Activated CD4-positive, alpha-beta memory T cell treated with anti-CD3 and anti-CD28 coated beads for 36 hours (primary cell): ENCODE measurements at regions of chr13 and their contacts with region 1.

Region 1: DNA sequence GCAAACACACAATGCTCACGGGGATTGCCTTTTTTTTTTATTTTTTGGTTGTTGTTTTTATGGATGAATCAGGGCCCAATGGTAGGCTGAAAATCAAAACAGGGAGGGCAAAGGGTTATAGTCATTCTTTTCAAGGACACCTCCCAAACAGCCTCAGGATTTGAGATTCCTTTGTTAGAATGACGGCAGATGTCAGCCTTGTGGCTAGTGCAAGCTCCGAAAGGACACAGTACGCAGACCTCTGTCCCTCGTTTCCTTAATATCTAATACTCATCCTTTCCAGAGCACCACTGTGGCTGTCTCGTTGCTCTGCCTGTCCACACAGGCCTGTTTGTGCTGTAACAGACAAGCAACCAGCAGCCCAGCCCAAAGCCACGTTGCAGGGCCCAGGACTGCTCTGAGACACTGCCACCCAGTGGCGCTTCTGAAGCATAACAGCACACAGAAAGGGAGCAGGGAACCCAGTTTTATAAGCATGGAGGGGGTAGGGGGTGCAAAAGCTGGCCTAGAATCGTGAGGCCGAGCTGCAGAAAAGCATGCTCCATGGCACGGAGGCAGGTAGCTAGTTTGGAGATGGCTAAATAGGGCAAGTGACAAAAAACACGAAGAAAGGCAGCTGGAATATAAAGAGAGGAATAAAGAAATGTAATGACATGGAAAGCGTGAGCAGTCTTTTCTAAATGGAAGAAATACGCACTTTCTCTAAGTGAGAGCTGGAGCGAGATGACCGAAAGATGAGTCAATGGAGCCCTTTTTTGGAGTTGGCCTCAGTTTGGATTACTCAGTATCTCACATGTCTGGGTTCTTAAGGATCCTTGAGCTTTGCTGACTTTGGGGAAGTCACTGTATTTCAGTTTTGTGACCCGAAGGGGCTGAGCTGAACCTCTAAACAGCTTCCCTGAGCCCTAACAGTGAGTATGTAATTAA is 40.7 kb upstream of the MEDAG start:
- DNase-seq: peak; percentile 70
- H3K4me3 Mint-ChIP-seq: no peak overlapping the region
- H3K27ac Mint-ChIP-seq: no peak overlapping the region
- H3K4me1 Mint-ChIP-seq: peaks cover 7% of the 10 kb centered on the region
- H3K27me3 Mint-ChIP-seq: peaks cover 9% of the 10 kb centered on the region

Region 2: DNA sequence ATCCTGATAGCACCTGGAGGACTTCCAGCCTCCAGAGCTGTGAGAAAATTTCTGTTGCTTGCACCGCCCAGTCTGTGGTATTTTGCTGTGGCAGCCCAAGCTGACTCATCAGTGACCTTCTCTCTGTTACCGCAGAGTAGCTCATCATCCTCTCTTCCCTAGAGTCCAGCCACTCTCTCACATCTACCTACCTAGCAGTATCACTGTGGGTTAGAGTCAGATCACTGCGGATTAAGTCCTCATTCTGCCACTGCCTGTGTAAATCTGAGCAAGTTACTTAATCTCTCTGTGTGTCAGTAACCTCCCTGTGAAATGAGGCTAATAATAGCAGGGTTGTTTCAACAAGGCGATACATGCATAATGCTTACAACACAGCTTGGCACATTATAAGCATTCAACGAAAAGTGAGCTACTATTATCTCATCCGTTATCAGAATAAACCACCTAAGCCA is 288.0 kb before region 1 on chr13:
- CTCF ChIA-PET with region 1: no interaction called
- POLR2A ChIA-PET with region 1: no interaction called
- intact Hi-C with region 1: loop called (anchors 5 kb)
- DNase-seq: peak; percentile 80
- H3K4me3 Mint-ChIP-seq: no peak overlapping the region
- H3K27ac Mint-ChIP-seq: peak overlapping the region; percentile 11
- H3K4me1 Mint-ChIP-seq: peaks cover 23% of the 10 kb centered on the region
- H3K27me3 Mint-ChIP-seq: peaks cover 1% of the 10 kb centered on the region

Region 3: GRCh38 chr13:30679483-30680330 is 185.7 kb before region 1 on chr13:
- CTCF ChIA-PET with region 1: no interaction called
- POLR2A ChIA-PET with region 1: no interaction called
- intact Hi-C with region 1: loop called (anchors 1 kb)
- DNase-seq: peak; percentile 48
- H3K4me3 Mint-ChIP-seq: no peak overlapping the region
- H3K27ac Mint-ChIP-seq: peak overlapping the region; percentile 6
- H3K4me1 Mint-ChIP-seq: peaks cover 9% of the 10 kb centered on the region
- H3K27me3 Mint-ChIP-seq: peaks cover 2% of the 10 kb centered on the region

Region 4: DNA sequence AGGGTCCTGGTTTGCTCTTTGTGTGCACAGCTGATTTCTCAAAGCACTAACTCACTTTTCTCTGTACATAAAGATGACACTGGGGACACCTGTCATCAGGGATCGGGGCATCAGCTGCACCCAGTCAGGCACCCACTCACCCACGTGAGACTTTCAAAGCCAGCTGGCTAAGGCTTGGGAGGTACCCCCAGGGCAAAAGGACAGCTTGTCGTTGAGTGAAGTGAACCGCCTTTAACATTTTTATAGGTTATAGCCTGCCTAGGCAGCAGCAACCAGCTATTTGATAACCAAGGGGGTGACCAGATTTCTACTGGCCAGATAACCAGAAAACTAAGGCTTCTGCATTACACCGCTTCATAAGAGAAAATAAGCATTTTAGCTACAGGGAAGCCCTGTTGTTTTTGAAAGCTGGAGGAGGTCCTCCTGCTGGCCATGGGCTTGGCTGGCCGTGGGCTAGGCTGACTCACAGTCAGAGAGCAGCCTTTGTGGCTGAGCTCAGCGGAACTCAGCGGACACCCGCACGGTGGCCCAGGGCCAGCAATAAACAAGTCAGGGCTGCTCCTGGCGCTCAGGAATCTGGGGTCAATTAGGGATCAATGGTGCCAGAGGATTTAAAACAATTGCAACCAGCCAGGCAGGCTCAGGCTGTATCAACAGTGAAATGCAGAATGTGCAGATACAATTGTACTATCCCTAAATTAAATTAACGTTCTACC is 72.9 kb before region 1 on chr13:
- CTCF ChIA-PET with region 1: interaction called, 11 read pairs
- POLR2A ChIA-PET with region 1: no interaction called
- intact Hi-C with region 1: no loop called
- DNase-seq: no peak
- H3K4me3 Mint-ChIP-seq: no peak overlapping the region
- H3K27ac Mint-ChIP-seq: no peak overlapping the region
- H3K4me1 Mint-ChIP-seq: peaks cover 35% of the 10 kb centered on the region
- H3K27me3 Mint-ChIP-seq: no peaks in the 10 kb centered on the region

Region 5: GRCh38 chr13:30802953-30803478 is 62.4 kb before region 1 on chr13:
- CTCF ChIA-PET with region 1: interaction called, 19 read pairs
- POLR2A ChIA-PET with region 1: no interaction called
- intact Hi-C with region 1: loop called (anchors 1 kb)
- DNase-seq: peak; percentile 89
- H3K4me3 Mint-ChIP-seq: no peak overlapping the region
- H3K27ac Mint-ChIP-seq: no peak overlapping the region
- H3K4me1 Mint-ChIP-seq: peaks cover 14% of the 10 kb centered on the region
- H3K27me3 Mint-ChIP-seq: no peaks in the 10 kb centered on the region

Region 6: GRCh38 chr13:30808589-30808988 is 56.8 kb before region 1 on chr13:
- CTCF ChIA-PET with region 1: interaction called, 19 read pairs
- POLR2A ChIA-PET with region 1: no interaction called
- intact Hi-C with region 1: loop called (anchors 1 kb)
- DNase-seq: peak; percentile 34
- H3K4me3 Mint-ChIP-seq: no peak overlapping the region
- H3K27ac Mint-ChIP-seq: no peak overlapping the region
- H3K4me1 Mint-ChIP-seq: peaks cover 12% of the 10 kb centered on the region
- H3K27me3 Mint-ChIP-seq: no peaks in the 10 kb centered on the region

Region 7: DNA sequence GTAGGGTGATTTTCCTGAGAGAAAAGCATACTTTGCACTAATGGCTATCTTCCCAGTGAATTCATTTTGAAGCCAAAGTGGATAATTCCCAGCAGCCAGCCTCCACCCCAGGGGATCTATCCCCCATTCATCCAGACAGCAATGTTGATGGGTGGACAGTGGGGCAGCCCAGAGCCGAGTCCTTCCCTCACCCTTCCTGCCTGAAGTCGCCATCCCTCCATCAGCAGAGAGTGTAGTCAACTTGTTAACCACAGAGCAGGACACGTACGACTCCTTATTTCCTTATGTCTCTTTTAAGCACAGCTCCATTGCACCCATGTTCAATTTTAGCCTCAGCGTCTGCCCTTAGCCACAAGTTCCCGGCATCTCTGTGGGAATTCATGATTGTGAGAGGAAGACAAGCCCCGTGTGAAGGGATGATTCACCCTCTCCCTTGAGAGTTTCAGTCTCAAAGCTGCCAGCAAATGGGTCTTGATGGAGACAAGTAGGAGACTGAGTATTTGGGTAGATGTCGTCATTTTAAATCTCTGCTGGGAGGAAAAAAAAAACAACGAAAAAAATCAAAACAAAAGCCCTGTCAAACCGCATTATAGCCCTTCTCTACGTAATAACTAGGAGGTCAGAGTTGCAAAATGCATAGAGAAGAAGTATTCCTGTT is 17.6 kb before region 1 on chr13:
- CTCF ChIA-PET with region 1: interaction called, 21 read pairs
- POLR2A ChIA-PET with region 1: no interaction called
- intact Hi-C with region 1: no loop called
- DNase-seq: peak; percentile 64
- H3K4me3 Mint-ChIP-seq: no peak overlapping the region
- H3K27ac Mint-ChIP-seq: peak overlapping the region; percentile 39
- H3K4me1 Mint-ChIP-seq: peaks cover 23% of the 10 kb centered on the region
- H3K27me3 Mint-ChIP-seq: peaks cover 9% of the 10 kb centered on the region